WTC11 (cell line): ENCODE measurements at regions of chr5 and their contacts with region 1.

Region 1: DNA sequence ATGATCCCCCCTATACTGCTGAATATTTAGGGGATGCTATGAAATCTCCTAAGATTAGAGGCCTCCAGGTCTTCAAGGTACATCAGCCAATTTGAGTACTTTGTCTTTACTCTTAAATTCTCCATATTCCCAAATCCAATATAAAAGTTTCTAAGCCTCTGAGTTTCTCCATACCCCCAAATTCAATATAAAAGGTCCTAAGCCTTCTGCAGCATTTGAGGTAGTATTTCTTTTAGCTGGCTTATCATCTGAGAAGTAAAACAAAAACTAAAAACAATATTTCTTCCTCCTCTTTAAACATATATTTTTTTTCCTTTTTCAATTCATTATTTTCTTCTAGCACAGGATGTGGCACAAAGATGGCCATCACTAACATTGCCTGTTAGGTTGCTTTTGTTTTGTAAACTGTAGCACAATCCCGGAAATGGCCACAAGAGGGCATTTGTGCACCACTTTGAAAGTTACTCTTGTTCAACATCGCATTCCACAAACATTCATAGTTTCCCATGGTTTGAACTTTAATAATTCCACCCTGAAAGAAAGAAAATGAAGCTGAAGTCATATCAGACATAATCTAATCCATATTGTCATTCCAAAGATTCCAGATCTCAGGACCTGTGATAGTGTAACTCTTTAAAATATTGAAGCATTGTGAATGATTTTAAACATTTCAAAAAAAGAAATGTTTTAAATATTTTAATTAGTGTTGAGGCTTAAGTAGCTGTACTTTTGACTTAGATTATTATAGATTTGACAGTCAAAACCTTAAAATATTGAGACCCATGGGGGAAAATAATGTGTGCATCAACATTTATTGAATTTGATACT is 21.0 kb upstream of the SCGB3A2 start:
- DNase-seq: peak; percentile 77
- ATAC-seq: no peak
- H3K4me3 Mint-ChIP-seq: no peak overlapping the region
- H3K27ac Mint-ChIP-seq: peak overlapping the region; percentile 7; the same call in 1 of the 2 replicates
- H3K4me1 Mint-ChIP-seq: peaks cover 83% of the 10 kb centered on the region
- H3K27me3 Mint-ChIP-seq: no peaks in the 10 kb centered on the region
- CTCF ChIP-seq: peak; percentile 84

Region 2: DNA sequence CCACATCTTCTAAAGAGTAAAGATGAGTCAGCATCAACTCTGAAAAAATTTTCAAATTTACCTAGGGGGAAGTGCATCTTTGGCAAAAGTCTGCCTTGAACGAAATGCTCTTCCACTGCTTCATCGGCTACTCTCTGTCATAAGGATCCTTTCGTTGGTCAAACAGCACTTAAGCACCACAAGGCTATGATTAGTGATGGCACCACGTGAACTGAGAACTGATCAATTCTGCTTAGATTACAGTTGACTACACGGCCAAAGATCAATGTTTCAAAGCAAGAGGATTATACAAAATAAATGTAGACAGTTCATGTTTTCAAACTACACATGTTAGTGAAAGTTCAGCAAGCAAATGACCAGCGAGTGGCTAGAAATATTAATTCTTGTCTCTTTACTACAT is 84.4 kb before region 1 on chr5:
- CTCF ChIA-PET with region 1: no interaction called
- POLR2A ChIA-PET with region 1: no interaction called
- DNase-seq: no peak
- ATAC-seq: no peak
- H3K4me3 Mint-ChIP-seq: no peak overlapping the region
- H3K27ac Mint-ChIP-seq: peak overlapping the region; percentile 57; the same call in 1 of the 2 replicates
- H3K4me1 Mint-ChIP-seq: peaks cover 21% of the 10 kb centered on the region
- H3K27me3 Mint-ChIP-seq: no peaks in the 10 kb centered on the region
- CTCF ChIP-seq: no peak

Region 3: GRCh38 chr5:147874910-147875367 is 17.4 kb after region 1 on chr5:
- CTCF ChIA-PET with region 1: interaction called, 6 read pairs
- POLR2A ChIA-PET with region 1: interaction called, 10 read pairs
- DNase-seq: peak; percentile 38
- ATAC-seq: peak; percentile 78
- H3K4me3 Mint-ChIP-seq: peak overlapping the region; percentile 96
- H3K27ac Mint-ChIP-seq: peak overlapping the region; percentile 98
- H3K4me1 Mint-ChIP-seq: peaks cover 71% of the 10 kb centered on the region
- H3K27me3 Mint-ChIP-seq: no peaks in the 10 kb centered on the region; the same call in 1 of the 2 replicates
- CTCF ChIP-seq: no peak

Region 4: GRCh38 chr5:147949711-147950573 is 92.4 kb after region 1 on chr5:
- CTCF ChIA-PET with region 1: no interaction called
- POLR2A ChIA-PET with region 1: no interaction called
- DNase-seq: no peak
- ATAC-seq: peak; percentile 71
- H3K4me3 Mint-ChIP-seq: no peak overlapping the region
- H3K27ac Mint-ChIP-seq: no peak overlapping the region; the same call in 1 of the 2 replicates
- H3K4me1 Mint-ChIP-seq: peaks cover 17% of the 10 kb centered on the region
- H3K27me3 Mint-ChIP-seq: no peaks in the 10 kb centered on the region
- CTCF ChIP-seq: peak; percentile 42